ENCODE measurements at regions of chr5 and their contacts with region 1.

Region 1: DNA sequence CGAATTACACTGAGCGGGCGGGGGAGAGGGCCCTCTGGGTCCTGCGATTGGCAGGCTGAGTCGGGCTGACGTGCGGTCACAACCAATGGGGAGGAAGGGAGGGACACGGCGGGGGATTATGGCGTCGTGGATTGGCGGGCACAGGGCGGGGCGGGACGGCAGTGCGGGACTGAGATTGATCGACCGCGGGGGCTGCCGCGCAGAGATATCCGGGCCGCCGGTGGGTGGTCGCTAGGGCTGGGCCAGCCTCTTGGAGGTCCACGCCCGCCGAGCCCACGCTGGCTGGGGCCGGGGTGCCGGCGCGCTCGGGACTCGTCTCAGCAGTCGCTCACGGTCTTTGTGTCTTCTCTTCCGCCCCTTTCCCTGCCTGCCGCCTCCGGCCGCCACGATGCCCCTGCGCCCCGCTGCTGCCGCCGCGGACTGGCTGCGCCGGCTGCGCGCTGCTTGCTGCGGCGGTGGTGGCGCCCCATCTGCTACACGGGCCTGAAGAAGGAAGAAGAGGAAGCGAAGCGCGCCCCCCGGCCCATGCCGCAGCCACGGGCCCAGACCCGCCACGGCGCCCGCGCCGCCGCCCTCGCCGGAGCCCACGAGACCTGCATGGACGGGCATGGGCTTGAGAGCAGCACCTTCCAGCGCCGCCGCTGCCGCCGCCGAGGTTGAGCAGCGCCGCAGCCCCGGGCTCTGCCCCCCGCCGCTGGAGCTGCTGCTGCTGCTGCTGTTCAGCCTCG is at the start of gene RGMB:
- DNase-seq: peak; percentile 99
- H3K4me3 ChIP-seq: peak within 1 kb of the TSS; percentile 92
- H3K27ac ChIP-seq: peak within 1 kb of the TSS; percentile 83
- H3K27me3 ChIP-seq: no peaks in the 10 kb centered on the region
- CTCF ChIP-seq: no peak
- polyA plus RNA-seq, gene RGMB: 53.6 and 57.7 TPM in 2 replicates

Region 2: DNA sequence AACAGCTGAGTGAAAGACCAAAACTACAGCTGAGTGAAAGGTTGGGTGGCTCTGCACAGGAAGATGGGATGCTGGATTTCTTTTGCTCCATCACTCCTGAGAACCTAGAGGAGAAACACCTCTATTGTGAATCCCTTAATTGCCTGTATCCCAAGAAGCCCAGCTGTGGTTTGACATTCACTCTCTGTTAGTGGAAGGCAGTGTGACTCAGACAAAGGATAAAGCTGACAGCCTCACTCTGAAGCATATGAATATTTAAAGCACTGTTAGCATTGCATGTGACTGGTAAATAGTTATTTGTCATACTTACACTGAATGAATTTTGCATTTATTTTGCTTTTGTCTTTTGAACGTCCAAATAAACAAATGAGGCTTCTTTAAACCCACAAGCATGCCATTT is 1223.5 kb before region 1 on chr5:
- CTCF ChIA-PET with region 1: interaction called, 13 read pairs
- POLR2A ChIA-PET with region 1: no interaction called
- DNase-seq: no peak
- H3K4me3 ChIP-seq: no peak overlapping the region
- H3K27ac ChIP-seq: no peak overlapping the region
- H3K27me3 ChIP-seq: no peaks in the 10 kb centered on the region
- CTCF ChIP-seq: no peak

Measured in AG04450 (cell line).